Brain microvascular endothelial cell (primary cell): ENCODE measurements at regions of chr14 and their contacts with region 1.

Region 1: DNA sequence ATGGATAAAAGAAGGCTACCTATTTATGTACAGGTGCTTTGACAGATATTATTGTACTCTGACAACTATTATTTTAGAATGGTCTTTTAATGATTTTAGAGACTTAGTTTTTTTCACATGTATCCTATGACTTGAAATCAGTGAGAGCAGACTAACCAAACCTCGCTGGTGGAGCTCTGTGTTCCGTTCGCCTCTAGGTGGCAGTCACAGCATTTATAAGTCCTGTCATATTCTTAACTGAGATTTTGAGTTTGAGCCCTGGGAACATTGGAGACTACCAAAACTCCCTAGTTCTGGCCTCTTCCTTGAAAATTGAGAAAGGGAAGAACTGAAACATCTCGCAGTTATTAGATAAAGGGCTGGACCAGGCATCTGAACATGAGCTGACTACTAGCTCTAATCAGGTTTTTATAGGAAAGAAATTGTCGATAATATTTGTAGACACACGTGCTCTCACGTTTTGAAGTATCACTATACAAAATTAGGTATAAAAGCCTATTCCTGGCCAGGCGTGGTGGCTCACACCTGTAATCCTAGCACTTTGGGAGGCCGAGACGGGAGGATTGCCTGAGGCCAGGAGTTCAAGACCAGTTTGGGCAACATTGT is 48.3 kb downstream of the TTLL5 start:
- DNase-seq: peak; percentile 85
- H3K4me3 ChIP-seq: no peak overlapping the region
- H3K27ac ChIP-seq: no peak overlapping the region
- H3K27me3 ChIP-seq: no peaks in the 10 kb centered on the region
- CTCF ChIP-seq: peak; percentile 89

Region 2: DNA sequence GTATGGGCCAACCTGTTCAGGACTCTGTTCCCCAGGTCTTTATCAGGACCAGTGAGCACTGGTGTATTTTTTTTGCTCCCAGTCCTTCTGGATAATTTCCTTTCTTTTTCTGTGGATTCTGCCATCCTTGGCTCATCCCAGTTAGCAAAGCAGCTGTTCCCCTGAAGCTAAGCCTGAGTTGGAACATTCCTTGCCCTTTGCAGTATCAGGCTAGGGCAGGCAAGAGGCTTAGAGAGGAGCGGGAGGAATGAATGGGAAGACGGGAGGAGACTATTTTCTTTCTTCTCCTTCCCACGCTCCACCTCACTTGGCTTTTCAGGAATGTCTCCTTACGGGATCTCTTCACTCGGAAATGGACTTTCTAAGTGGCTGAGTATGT is 77.9 kb before region 1 on chr14:
- in situ Hi-C with region 1: no loop called
- DNase-seq: no peak
- H3K4me3 ChIP-seq: no peak overlapping the region
- H3K27ac ChIP-seq: no peak overlapping the region
- H3K27me3 ChIP-seq: no peaks in the 10 kb centered on the region
- CTCF ChIP-seq: no peak

Region 3: GRCh38 chr14:75960231-75960630 is 250.9 kb after region 1 on chr14:
- in situ Hi-C with region 1: loop called (anchors 25 kb)
- DNase-seq: no peak
- H3K4me3 ChIP-seq: no peak overlapping the region
- H3K27ac ChIP-seq: no peak overlapping the region
- H3K27me3 ChIP-seq: no peaks in the 10 kb centered on the region
- CTCF ChIP-seq: no peak